ENCODE measurements at regions of chr1 and their contacts with region 1.

Region 1: GRCh38 chr1:150293433-150294168 is at the start of gene MRPS21:
- DNase-seq: peak; percentile 51 to 95
- H3K4me3 ChIP-seq: peak within 1 kb of the TSS; percentile 62 to 88
- H3K27ac ChIP-seq: peak within 1 kb of the TSS; percentile 78 to 85
- H3K4me1 ChIP-seq: peaks cover 3 to 8% of the 10 kb centered on the region in 2 donors
- H3K27me3 ChIP-seq: no peaks in the 10 kb centered on the region
- CTCF ChIP-seq: no peak
- total RNA-seq, gene MRPS21: 17.1 TPM

Region 2: DNA sequence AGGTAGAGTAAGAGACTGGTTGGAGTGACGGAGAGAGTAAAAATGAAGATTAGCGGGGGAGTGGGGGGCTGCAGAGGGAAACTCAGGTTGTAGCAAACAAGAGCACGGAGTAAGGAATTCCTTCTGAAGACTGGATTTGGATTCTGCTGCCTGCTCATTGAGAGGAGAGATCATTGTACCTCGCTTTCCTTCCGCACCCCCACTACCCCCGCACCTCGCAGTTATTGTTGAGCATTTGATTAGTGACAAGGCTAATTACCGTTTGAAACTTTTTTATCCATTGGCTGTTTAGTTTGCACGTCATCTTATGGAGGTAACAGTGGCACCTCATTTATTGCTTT is 28.2 kb after region 1 on chr1:
- intact Hi-C with region 1: loop called (anchors 1 kb)
- DNase-seq: no peak
- H3K4me3 ChIP-seq: peak overlapping the region; percentile 75 to 81
- H3K27ac ChIP-seq: peak overlapping the region; percentile 81 to 82
- H3K4me1 ChIP-seq: no peaks in the 10 kb centered on the region
- H3K27me3 ChIP-seq: no peaks in the 10 kb centered on the region
- CTCF ChIP-seq: no peak

Region 3: DNA sequence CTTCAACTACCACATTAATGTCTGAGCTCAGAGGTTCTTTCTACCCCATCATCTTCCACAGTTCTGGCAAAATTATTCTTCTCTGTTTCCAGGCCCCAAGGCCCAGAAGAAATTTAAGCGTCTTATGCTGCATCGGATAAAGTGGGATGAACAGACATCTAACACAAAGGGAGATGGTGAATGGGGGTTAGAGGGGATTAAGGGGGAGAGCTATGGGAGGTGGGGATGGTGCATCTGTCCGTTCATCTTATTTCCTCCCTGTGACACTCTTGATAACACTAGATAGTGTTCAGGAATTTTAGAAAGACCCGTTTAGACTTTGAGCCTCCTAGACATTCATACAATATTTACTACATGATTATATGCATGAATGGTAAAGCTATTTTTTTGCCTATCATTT is 52.7 kb after region 1 on chr1:
- intact Hi-C with region 1: no loop called
- DNase-seq: no peak
- H3K4me3 ChIP-seq: no peak overlapping the region
- H3K27ac ChIP-seq: no peak overlapping the region
- H3K4me1 ChIP-seq: no peaks in the 10 kb centered on the region
- H3K27me3 ChIP-seq: no peaks in the 10 kb centered on the region
- CTCF ChIP-seq: no peak

Measured in ascending aorta (tissue), 2 donors.